PC-9 (cell line): ENCODE measurements at regions of chr5 and their contacts with region 1.

Region 1: GRCh38 chr5:68711293-68712200 is 382.3 kb upstream of the SLC30A5 start:
- DNase-seq: no peak
- H3K4me3 ChIP-seq: no peak overlapping the region
- H3K27ac ChIP-seq: no peak overlapping the region
- H3K4me1 ChIP-seq: no peaks in the 10 kb centered on the region
- H3K27me3 ChIP-seq: no peaks in the 10 kb centered on the region
- CTCF ChIP-seq: no peak

Region 2: DNA sequence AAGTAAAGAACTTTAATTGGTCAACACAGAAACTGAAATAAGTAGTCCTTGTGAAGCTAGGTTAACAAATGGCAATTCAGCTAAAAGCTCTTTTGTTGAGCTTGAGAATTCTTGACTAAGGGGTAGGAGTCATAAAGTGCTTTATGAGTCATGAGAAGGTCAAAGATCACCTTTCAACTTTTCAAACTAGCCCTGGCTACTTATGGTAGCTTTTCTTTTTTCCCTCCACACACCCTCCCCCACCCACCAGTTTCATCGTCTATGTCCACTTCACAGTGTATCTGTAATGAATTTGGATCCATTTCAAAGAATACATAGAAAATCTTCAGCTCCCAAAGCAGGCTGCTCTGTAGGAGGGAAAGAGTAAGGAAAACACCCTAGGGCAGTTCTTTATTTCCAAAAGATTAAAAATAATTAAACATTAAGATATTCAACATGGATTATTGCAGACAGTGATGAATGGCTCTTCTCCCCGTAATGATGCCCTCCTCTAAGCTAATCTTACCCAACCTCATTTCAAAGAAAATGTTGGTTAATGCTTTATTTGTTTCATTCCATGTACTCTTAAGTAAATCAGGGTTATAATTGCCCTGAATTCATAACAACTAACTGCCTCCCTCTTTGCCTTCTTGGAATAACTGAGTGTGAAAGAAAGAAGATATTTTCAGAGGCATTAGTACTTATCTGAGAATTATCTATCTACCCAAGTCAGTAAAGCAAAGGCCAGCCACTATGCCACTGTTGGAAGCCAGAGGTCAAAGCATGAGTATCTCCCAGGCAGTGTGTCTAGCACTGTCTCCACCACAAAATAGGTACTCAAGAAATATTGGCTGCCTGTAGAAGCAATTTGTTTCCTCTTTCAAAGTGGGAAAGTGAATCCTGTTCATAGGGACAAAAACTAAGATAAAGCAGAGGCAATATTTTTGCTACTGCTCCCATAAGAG is 205.4 kb before region 1 on chr5:
- CTCF ChIA-PET with region 1: interaction called, 12 read pairs
- POLR2A ChIA-PET with region 1: no interaction called
- intact Hi-C with region 1: no loop called
- DNase-seq: peak in 1 of 2 experiments; percentile 42
- H3K4me3 ChIP-seq: no peak overlapping the region
- H3K27ac ChIP-seq: no peak overlapping the region
- H3K4me1 ChIP-seq: peaks cover 12% of the 10 kb centered on the region
- H3K27me3 ChIP-seq: no peaks in the 10 kb centered on the region
- CTCF ChIP-seq: no peak

Region 3: GRCh38 chr5:69300537-69301203 is 589.1 kb after region 1 on chr5:
- CTCF ChIA-PET with region 1: no interaction called
- POLR2A ChIA-PET with region 1: no interaction called
- intact Hi-C with region 1: no loop called
- DNase-seq: no peak
- H3K4me3 ChIP-seq: no peak overlapping the region
- H3K27ac ChIP-seq: no peak overlapping the region
- H3K4me1 ChIP-seq: no peaks in the 10 kb centered on the region
- H3K27me3 ChIP-seq: no peaks in the 10 kb centered on the region
- CTCF ChIP-seq: no peak

Region 4: GRCh38 chr5:69317391-69317790 is 605.8 kb after region 1 on chr5:
- CTCF ChIA-PET with region 1: no interaction called
- POLR2A ChIA-PET with region 1: no interaction called
- intact Hi-C with region 1: no loop called
- DNase-seq: no peak
- H3K4me3 ChIP-seq: no peak overlapping the region
- H3K27ac ChIP-seq: no peak overlapping the region
- H3K4me1 ChIP-seq: no peaks in the 10 kb centered on the region
- H3K27me3 ChIP-seq: no peaks in the 10 kb centered on the region
- CTCF ChIP-seq: no peak